ENCODE measurements at regions of chrX and their contacts with region 1.

Region 1: DNA sequence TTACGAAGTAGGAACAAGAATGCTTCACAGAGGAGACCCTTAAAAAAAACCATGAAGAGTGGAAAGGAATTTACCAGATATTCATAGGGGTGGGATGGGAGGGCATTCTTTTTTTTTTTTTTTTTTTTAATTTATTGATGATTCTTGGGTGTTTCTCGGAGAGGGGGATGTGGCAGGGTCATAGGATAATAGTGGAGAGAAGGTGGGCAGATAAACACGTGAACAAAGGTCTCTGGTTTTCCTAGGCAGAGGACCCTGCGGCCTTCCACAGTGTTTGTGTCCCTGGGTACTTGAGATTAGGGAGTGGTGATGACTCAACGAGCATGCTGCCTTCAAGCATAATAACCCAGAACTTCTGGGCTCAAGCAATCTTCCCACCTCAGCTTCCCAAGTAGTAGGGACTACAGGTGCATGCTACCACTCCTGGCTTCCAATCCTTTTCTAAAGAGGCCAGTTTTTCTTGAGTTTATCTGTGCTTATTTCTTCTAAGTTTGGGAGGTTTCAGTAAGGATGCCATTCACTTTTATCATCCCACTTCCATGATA is 65.9 kb upstream of the OGT start:
- DNase-seq: no peak
- ATAC-seq: no peak
- H3K4me3 ChIP-seq: no peak overlapping the region
- H3K27ac ChIP-seq: no peak overlapping the region
- H3K4me1 ChIP-seq: no peaks in the 10 kb centered on the region
- H3K27me3 ChIP-seq: peaks cover 0 to 4% (median 0%) of the 10 kb centered on the region in 9 donors
- CTCF ChIP-seq: no peak
- POLR2A ChIP-seq: no peak

Region 2: DNA sequence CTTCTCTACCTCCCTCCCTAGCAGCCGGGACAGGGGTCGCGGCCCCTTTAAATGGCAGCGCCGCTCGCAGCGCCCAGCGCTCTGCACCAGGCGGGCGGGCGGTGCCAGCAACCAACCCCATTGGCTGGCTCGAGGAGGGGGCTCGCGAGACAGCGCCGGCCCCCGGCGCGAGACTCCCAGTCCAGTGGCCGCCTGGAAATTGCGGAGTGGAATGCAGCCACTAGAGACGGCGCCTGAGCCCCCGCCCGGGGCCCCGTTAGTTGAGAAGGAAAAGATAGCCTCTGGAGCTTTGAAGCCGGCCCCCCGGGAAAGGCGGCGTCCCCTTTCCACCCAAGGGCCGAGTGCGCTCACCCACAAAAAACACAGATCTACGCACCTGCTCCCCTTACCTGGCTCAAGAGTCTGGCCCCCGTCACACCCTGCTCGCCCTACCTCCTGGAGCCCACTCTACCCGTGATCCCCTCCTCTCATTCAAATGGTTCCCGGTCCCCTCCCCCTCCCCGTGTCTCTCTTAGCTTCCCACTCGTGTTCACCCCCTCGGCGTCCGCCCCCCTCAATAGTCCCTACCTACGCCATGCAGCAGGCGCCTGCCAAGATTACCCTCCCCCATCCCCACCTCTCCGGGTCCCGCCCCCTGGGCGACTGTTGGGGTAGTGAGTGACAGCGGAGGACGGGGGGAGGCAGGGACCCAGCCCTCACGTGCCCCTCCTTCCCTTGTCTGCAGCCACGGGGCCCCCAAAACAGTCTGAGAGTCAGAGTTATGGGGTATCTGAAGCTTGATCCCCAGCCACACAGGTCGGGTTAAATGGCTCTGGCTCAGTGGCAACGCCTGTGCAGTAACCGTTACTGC is 212.7 kb before region 1 on chrX and contains the start of gene ZMYM3:
- intact Hi-C with region 1: no loop called
- DNase-seq: peak; percentile 85 to 92 (median 90)
- ATAC-seq: peak; percentile 93 to 96 (median 94)
- H3K4me3 ChIP-seq: peak within 1 kb of the TSS; percentile 53 to 98 (median 66)
- H3K27ac ChIP-seq: peak within 1 kb of the TSS; percentile 24 to 93 (median 86)
- H3K4me1 ChIP-seq: peaks cover 0 to 14% (median 8%) of the 10 kb centered on the region in 12 donors
- H3K27me3 ChIP-seq: no peaks in the 10 kb centered on the region
- CTCF ChIP-seq: no peak
- POLR2A ChIP-seq: peak in 1 of 2 donors; percentile 51
- total RNA-seq, gene ZMYM3: 11.3 to 22.9 (median 15.2) TPM

Region 3: GRCh38 chrX:71400710-71401109 is 66.3 kb before region 1 on chrX:
- intact Hi-C with region 1: loop called in 1 of 10 experiments (anchors 10 kb)
- DNase-seq: no peak
- ATAC-seq: no peak
- H3K4me3 ChIP-seq: no peak overlapping the region
- H3K27ac ChIP-seq: no peak overlapping the region
- H3K4me1 ChIP-seq: no peaks in the 10 kb centered on the region
- H3K27me3 ChIP-seq: no peaks in the 10 kb centered on the region
- CTCF ChIP-seq: no peak
- POLR2A ChIP-seq: no peak

Region 4: GRCh38 chrX:71550578-71550977 is 83.5 kb after region 1 on chrX:
- intact Hi-C with region 1: loop called in 1 of 10 experiments (anchors 10 kb)
- DNase-seq: no peak
- ATAC-seq: no peak
- H3K4me3 ChIP-seq: no peak overlapping the region
- H3K27ac ChIP-seq: no peak overlapping the region
- H3K4me1 ChIP-seq: peaks cover 0 to 17% (median 0%) of the 10 kb centered on the region in 12 donors
- H3K27me3 ChIP-seq: peaks cover 0 to 5% (median 0%) of the 10 kb centered on the region in 9 donors
- CTCF ChIP-seq: no peak
- POLR2A ChIP-seq: no peak

Measured in heart left ventricle (tissue), 16 donors.